ENCODE measurements at regions of chr9 and their contacts with region 1.

Region 1: DNA sequence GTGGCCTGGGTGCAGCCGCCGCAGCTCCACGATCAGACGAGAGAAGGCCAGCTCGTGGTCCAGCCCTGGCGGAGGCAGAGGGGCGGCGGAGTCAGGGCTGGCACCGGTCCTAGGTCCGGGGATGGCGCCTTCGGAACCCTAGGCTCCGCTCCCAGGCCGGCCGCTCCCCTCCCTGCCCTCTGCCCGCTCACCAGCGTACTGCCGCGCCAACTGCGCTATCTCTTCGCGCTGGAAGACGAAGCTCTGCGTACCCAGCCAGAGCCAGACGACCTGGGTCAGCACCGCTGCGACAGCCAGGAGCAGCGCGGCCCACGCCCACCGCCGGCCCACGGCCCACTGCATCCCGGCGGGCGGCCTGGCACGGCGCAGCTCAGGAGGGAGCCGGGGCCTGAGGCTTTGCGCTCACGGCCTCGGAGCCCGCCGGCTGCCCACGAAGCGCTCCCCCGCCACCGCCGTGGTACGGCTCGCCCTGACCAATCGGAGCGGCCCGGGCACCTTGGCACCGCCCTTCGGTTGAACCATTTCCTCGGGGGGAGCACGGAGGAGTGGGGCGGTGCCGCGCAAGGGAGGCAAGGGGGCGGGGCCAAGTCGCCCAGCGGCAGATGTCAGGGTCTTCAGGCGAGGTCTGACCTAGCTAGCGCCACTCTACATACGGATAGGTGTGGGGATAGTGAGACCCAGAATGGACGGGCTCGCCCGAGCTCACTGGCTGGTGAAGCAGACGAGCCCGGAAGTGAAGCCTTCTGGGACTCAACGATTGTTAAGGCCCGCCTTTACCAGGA is at the start of gene SIGMAR1:
- DNase-seq: peak; percentile 95 to 98 (median 98)
- ATAC-seq: peak; percentile 95 to 96
- H3K4me3 ChIP-seq: peak within 1 kb of the TSS; percentile 49
- H3K27ac ChIP-seq: peak within 1 kb of the TSS; percentile 80
- H3K4me1 ChIP-seq: no peaks in the 10 kb centered on the region
- H3K27me3 ChIP-seq: no peaks in the 10 kb centered on the region
- total RNA-seq, gene SIGMAR1: 28.6 to 37.2 (median 35.5) TPM

Region 2: GRCh38 chr9:34701769-34702736 is 64.5 kb after region 1 on chr9:
- intact Hi-C with region 1: loop called in 1 of 4 experiments (anchors 10 kb)
- DNase-seq: peak; percentile 88 to 95 (median 95)
- ATAC-seq: peak; percentile 93 to 94
- H3K4me3 ChIP-seq: peak overlapping the region; percentile 66
- H3K27ac ChIP-seq: peak overlapping the region; percentile 34
- H3K4me1 ChIP-seq: no peaks in the 10 kb centered on the region
- H3K27me3 ChIP-seq: no peaks in the 10 kb centered on the region